ENCODE measurements at regions of chr18 and their contacts with region 1.

Region 1: DNA sequence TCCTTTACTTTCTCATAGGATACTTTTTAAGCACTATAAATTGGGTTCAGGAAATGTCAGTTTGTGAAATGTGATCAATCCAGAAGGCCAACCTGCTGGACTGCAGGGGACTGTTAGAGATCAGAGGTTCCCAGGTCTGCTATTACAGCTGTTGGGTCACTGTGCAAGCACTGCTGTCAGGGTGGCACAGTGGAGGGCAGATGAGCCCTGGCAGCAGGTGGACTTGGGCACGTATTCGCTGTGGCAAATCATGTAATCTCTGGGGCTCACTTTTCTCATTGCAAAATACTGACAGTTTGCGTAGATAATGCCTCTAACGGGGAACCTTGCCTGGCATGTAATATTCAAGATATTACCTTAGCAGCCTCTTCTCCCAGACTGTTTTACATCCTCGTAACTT is 18.1 kb downstream of the RAB31 start:
- DNase-seq: no peak

Region 2: DNA sequence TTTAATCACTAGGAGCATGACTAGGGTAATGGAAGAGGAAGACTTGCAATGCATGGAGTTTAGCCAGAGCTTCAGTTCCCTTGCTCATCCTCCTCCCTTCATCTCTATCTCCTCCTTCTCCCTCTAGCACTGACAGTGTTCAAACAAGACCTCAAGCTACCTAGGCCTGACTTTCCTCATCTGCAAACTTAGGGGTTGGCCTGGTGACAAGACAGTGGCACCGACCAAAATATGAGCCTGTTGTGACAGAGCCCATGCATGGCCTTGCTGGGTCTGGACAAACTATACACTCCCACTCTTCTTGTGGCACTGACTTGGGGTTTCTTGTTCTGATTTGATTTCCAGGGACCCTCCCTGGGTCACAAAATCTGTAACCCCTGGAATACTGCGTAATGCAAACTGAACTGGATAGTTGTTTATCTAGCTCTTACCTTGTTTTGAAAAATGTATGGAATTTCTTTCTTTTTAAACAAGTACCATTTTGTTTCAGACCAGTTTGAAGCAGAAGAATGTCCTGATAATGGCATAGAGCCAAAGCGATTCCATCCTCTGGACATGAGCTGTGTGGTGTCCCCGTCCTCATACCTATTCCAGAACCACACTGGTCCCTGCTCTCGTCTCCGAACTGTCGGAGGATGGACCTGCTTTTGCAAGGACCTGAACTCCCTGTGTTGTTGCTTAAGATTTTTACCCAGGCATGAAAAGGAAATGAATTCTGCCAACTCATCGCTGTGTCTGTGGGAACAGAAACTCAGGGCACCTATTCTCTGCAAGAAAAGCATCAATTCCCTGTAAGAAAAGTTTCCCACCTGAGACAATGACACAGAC is 78.5 kb before region 1 on chr18:
- intact Hi-C with region 1: loop called (anchors 2 kb)
- DNase-seq: no peak

Region 3: GRCh38 chr18:9673296-9674251 is 52.6 kb before region 1 on chr18:
- intact Hi-C with region 1: no loop called
- DNase-seq: peak in 6 of 10 donors; percentile 21 to 86 (median 66)

Region 4: GRCh38 chr18:10289951-10290637 is 563.9 kb after region 1 on chr18:
- intact Hi-C with region 1: no loop called
- DNase-seq: no peak